ENCODE measurements at regions of chr2 and their contacts with region 1.

Region 1: GRCh38 chr2:131521961-131522794 is 5.5 kb upstream of the CCDC74A start:
- DNase-seq: no peak
- ATAC-seq: 0 out of 2 replicates have a peak, but pooled peaks have one; percentile 16
- H3K4me3 ChIP-seq: no peak overlapping the region
- H3K27ac ChIP-seq: no peak overlapping the region
- H3K4me1 ChIP-seq: no peaks in the 10 kb centered on the region
- H3K27me3 ChIP-seq: no peaks in the 10 kb centered on the region
- CTCF ChIP-seq: no peak
- POLR2A ChIP-seq: no peak
- RAD21 ChIP-seq: no peak

Region 2: GRCh38 chr2:130150181-130151144 is 1371.7 kb before region 1 on chr2:
- CTCF ChIA-PET with region 1: no interaction called
- POLR2A ChIA-PET with region 1: no interaction called
- dilution Hi-C with region 1: no loop called
- in situ Hi-C with region 1: loop called (anchors 25 kb)
- intact Hi-C with region 1: no loop called
- DNase-seq: no peak
- ATAC-seq: no peak
- H3K4me3 ChIP-seq: no peak overlapping the region
- H3K27ac ChIP-seq: no peak overlapping the region
- H3K4me1 ChIP-seq: no peaks in the 10 kb centered on the region
- H3K27me3 ChIP-seq: no peaks in the 10 kb centered on the region
- CTCF ChIP-seq: no peak
- POLR2A ChIP-seq: no peak
- RAD21 ChIP-seq: no peak

Region 3: GRCh38 chr2:131093006-131093695 is 429.0 kb before region 1 on chr2 and contains the start of gene FAM168B:
- CTCF ChIA-PET with region 1: no interaction called
- POLR2A ChIA-PET with region 1: no interaction called
- dilution Hi-C with region 1: no loop called
- in situ Hi-C with region 1: no loop called
- intact Hi-C with region 1: no loop called
- DNase-seq: peak; percentile 88
- ATAC-seq: peak; percentile 91
- H3K4me3 ChIP-seq: peak within 1 kb of the TSS; percentile 89
- H3K27ac ChIP-seq: peak within 1 kb of the TSS; percentile 96
- H3K4me1 ChIP-seq: no peaks in the 10 kb centered on the region
- H3K27me3 ChIP-seq: no peaks in the 10 kb centered on the region
- CTCF ChIP-seq: no peak
- POLR2A ChIP-seq: peak; percentile 93
- RAD21 ChIP-seq: no peak
- total RNA-seq, gene FAM168B: 76.4 and 86.7 TPM in 2 replicates

Region 4: GRCh38 chr2:131105156-131105949 is 416.8 kb before region 1 on chr2 and contains the start of gene PLEKHB2:
- CTCF ChIA-PET with region 1: no interaction called
- POLR2A ChIA-PET with region 1: no interaction called
- dilution Hi-C with region 1: no loop called
- in situ Hi-C with region 1: loop called (anchors 25 kb)
- intact Hi-C with region 1: no loop called
- DNase-seq: peak; percentile 86
- ATAC-seq: peak; percentile 83
- H3K4me3 ChIP-seq: peak within 1 kb of the TSS; percentile 68
- H3K27ac ChIP-seq: peak within 1 kb of the TSS; percentile 48
- H3K4me1 ChIP-seq: peaks cover 5% of the 10 kb centered on the region
- H3K27me3 ChIP-seq: no peaks in the 10 kb centered on the region
- CTCF ChIP-seq: peak; percentile 29; the same call in 1 of the 2 replicates
- POLR2A ChIP-seq: peak; percentile 95
- RAD21 ChIP-seq: no peak
- total RNA-seq, gene PLEKHB2: 82.1 and 118 TPM in 2 replicates

Region 5: GRCh38 chr2:131425231-131425941 is 96.8 kb before region 1 on chr2:
- CTCF ChIA-PET with region 1: no interaction called
- POLR2A ChIA-PET with region 1: no interaction called
- dilution Hi-C with region 1: no loop called
- in situ Hi-C with region 1: no loop called
- intact Hi-C with region 1: no loop called
- DNase-seq: no peak
- ATAC-seq: no peak
- H3K4me3 ChIP-seq: no peak overlapping the region; the same call in 1 of the 2 replicates
- H3K27ac ChIP-seq: no peak overlapping the region
- H3K4me1 ChIP-seq: no peaks in the 10 kb centered on the region
- H3K27me3 ChIP-seq: peaks cover 33% of the 10 kb centered on the region
- CTCF ChIP-seq: no peak
- POLR2A ChIP-seq: no peak
- RAD21 ChIP-seq: no peak

Region 6: DNA sequence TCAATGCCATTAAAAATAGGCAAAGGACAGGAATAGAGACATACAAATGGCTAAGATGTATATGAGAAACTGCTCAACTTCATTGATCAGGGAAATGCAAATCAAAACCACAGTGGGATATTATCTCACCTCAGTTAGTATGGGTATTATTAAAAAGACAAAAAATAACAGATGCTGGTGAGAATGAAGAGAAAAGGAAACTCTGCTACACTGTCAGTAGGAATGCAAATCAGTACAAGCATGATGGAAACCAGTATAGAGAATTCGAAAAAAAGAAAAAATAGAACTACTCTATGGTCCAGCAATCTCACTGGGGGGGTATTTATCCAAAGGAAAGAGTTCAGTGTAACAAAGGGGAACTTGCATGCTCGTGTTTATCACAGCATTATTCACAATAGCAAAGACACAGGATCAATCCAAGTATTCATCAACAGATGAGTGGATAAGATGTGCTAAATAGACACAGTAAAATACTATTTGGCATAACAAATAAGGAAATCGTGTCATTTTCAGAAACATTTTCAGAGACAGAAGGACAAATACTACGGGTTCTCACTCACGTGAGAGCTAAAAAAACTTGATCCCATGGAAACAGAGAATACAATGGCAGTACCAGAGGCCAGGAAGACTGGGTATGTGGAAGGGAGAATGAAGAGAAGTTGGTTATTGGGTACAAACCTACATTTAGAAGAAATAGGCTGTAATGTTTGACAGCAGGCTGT is 66.1 kb after region 1 on chr2:
- CTCF ChIA-PET with region 1: no interaction called
- POLR2A ChIA-PET with region 1: no interaction called
- dilution Hi-C with region 1: no loop called
- in situ Hi-C with region 1: no loop called
- intact Hi-C with region 1: no loop called
- DNase-seq: no peak
- ATAC-seq: no peak
- H3K4me3 ChIP-seq: no peak overlapping the region
- H3K27ac ChIP-seq: no peak overlapping the region
- H3K4me1 ChIP-seq: no peaks in the 10 kb centered on the region
- H3K27me3 ChIP-seq: peaks cover 2% of the 10 kb centered on the region
- CTCF ChIP-seq: no peak
- POLR2A ChIP-seq: no peak
- RAD21 ChIP-seq: no peak